Panc1 (cell line): ENCODE measurements at regions of chr7 and their contacts with region 1.

Region 1: GRCh38 chr7:8217200-8218068 is 44.5 kb downstream of the ICA1 start:
- DNase-seq: peak; percentile 57
- ATAC-seq: 0 out of 2 replicates have a peak, but pooled peaks have one; percentile 53
- H3K4me3 ChIP-seq: no peak overlapping the region
- H3K27ac ChIP-seq: no peak overlapping the region
- H3K4me1 ChIP-seq: no peaks in the 10 kb centered on the region
- H3K27me3 ChIP-seq: no peaks in the 10 kb centered on the region
- CTCF ChIP-seq: peak; percentile 69; the same call in 1 of the 2 replicates

Region 2: GRCh38 chr7:7424151-7424873 is 793.1 kb before region 1 on chr7:
- CTCF ChIA-PET with region 1: interaction called, 3 read pairs
- POLR2A ChIA-PET with region 1: no interaction called
- in situ Hi-C with region 1: no loop called
- intact Hi-C with region 1: loop called (anchors 2 kb)
- DNase-seq: peak; percentile 74
- ATAC-seq: peak; percentile 97
- H3K4me3 ChIP-seq: peak overlapping the region; percentile 36 to 66
- H3K27ac ChIP-seq: no peak overlapping the region
- H3K4me1 ChIP-seq: no peaks in the 10 kb centered on the region
- H3K27me3 ChIP-seq: peaks cover 9% of the 10 kb centered on the region
- CTCF ChIP-seq: peak; percentile 93

Region 3: GRCh38 chr7:7595451-7595850 is 622.0 kb before region 1 on chr7:
- CTCF ChIA-PET with region 1: no interaction called
- POLR2A ChIA-PET with region 1: no interaction called
- in situ Hi-C with region 1: no loop called
- intact Hi-C with region 1: loop called (anchors 5 kb)
- DNase-seq: peak; percentile 15
- ATAC-seq: 0 out of 2 replicates have a peak, but pooled peaks have one; percentile 60
- H3K4me3 ChIP-seq: no peak overlapping the region
- H3K27ac ChIP-seq: no peak overlapping the region
- H3K4me1 ChIP-seq: no peaks in the 10 kb centered on the region
- H3K27me3 ChIP-seq: no peaks in the 10 kb centered on the region
- CTCF ChIP-seq: no peak

Region 4: GRCh38 chr7:7761340-7761980 is 456.0 kb before region 1 on chr7:
- CTCF ChIA-PET with region 1: no interaction called
- POLR2A ChIA-PET with region 1: no interaction called
- in situ Hi-C with region 1: no loop called
- intact Hi-C with region 1: loop called (anchors 10 kb)
- DNase-seq: peak; percentile 58
- ATAC-seq: peak; percentile 73
- H3K4me3 ChIP-seq: peak overlapping the region in 1 of 2 experiments; percentile 59; a peak in 2 of 4 replicates
- H3K27ac ChIP-seq: no peak overlapping the region
- H3K4me1 ChIP-seq: peaks cover 8% of the 10 kb centered on the region; the same call in 1 of the 2 replicates
- H3K27me3 ChIP-seq: no peaks in the 10 kb centered on the region
- CTCF ChIP-seq: peak; percentile 59; the same call in 1 of the 2 replicates

Region 5: GRCh38 chr7:8201846-8202441 is 15.5 kb before region 1 on chr7:
- CTCF ChIA-PET with region 1: no interaction called
- POLR2A ChIA-PET with region 1: no interaction called
- in situ Hi-C with region 1: no loop called
- intact Hi-C with region 1: no loop called
- DNase-seq: no peak
- ATAC-seq: no peak
- H3K4me3 ChIP-seq: no peak overlapping the region
- H3K27ac ChIP-seq: no peak overlapping the region
- H3K4me1 ChIP-seq: no peaks in the 10 kb centered on the region
- H3K27me3 ChIP-seq: peaks cover 25% of the 10 kb centered on the region
- CTCF ChIP-seq: no peak

Region 6: GRCh38 chr7:8295638-8296361 is 78.4 kb after region 1 on chr7:
- CTCF ChIA-PET with region 1: interaction called, 6 read pairs
- POLR2A ChIA-PET with region 1: no interaction called
- in situ Hi-C with region 1: no loop called
- intact Hi-C with region 1: loop called (anchors 5 kb)
- DNase-seq: peak; percentile 81
- ATAC-seq: peak; percentile 99
- H3K4me3 ChIP-seq: no peak overlapping the region
- H3K27ac ChIP-seq: no peak overlapping the region
- H3K4me1 ChIP-seq: no peaks in the 10 kb centered on the region
- H3K27me3 ChIP-seq: peaks cover 7% of the 10 kb centered on the region; the same call in 1 of the 2 replicates
- CTCF ChIP-seq: peak; percentile 82

Region 7: GRCh38 chr7:8528311-8528710 is 310.9 kb after region 1 on chr7:
- CTCF ChIA-PET with region 1: no interaction called
- POLR2A ChIA-PET with region 1: no interaction called
- in situ Hi-C with region 1: no loop called
- intact Hi-C with region 1: no loop called
- DNase-seq: no peak
- ATAC-seq: no peak
- H3K4me3 ChIP-seq: no peak overlapping the region
- H3K27ac ChIP-seq: no peak overlapping the region
- H3K4me1 ChIP-seq: no peaks in the 10 kb centered on the region
- H3K27me3 ChIP-seq: no peaks in the 10 kb centered on the region
- CTCF ChIP-seq: no peak